ENCODE measurements at regions of chr4 and their contacts with region 1.

Region 1: DNA sequence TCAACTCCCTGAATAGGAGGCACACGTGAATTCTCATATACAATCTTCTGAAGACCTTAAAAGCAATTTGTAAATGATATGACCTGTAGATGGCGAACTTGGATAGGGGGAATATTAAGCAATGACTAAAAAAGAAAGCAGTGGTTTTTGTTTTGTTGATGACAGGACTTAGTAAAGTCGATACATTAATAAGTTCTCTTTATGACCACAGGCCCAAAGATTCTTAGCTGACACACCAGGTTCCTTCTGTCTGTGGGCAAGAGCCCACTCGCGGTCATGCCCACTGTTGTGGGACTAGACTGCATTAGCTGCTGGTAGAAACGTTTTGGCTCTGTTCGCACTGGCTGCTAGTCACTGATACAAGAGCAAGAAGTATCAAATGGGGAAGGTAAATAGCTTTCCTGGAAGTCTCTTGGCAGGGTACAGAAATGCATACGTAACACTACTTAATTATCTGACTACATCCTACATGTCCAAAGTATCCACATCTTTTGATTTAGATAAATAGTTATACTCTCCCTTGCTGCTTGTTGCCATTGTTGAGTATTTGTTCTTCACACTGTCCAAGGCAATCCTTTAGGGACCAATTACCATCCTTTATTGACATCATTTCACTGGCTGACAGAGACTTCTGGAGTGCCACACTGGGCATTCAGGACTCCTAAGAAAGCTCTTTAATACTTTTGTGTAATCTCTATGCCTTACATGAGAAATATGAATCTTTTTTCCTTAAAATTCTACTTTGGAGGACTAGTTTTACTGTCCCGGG is 31.0 kb downstream of the ALPK1 start:
- DNase-seq: peak; percentile 73
- ATAC-seq: peak; percentile 92
- H3K4me3 ChIP-seq: no peak overlapping the region
- H3K27ac ChIP-seq: no peak overlapping the region
- H3K4me1 ChIP-seq: peaks cover 4% of the 10 kb centered on the region
- H3K27me3 ChIP-seq: no peaks in the 10 kb centered on the region
- CTCF ChIP-seq: peak; percentile 51 to 78 (median 52); a peak in 5 of 6 replicates
- EP300 ChIP-seq: 0 out of 4 replicates have a peak, but pooled peaks of 1 of the 2 experiments have one; percentile 17
- POLR2A ChIP-seq: no peak
- RAD21 ChIP-seq: peak; percentile 90

Region 2: GRCh38 chr4:112214390-112215264 is 113.5 kb before region 1 on chr4:
- CTCF ChIA-PET with region 1: interaction called, 22 read pairs
- POLR2A ChIA-PET with region 1: interaction called, 4 read pairs
- RAD21 ChIA-PET with region 1: interaction called, 9 read pairs
- SMC1A ChIA-PET with region 1: interaction called, 6 read pairs
- in situ Hi-C with region 1: no loop called
- intact Hi-C with region 1: no loop called
- DNase-seq: no peak
- ATAC-seq: peak; percentile 63; the same call in 2 of the 3 replicates
- H3K4me3 ChIP-seq: no peak overlapping the region
- H3K27ac ChIP-seq: no peak overlapping the region
- H3K4me1 ChIP-seq: no peaks in the 10 kb centered on the region
- H3K27me3 ChIP-seq: no peaks in the 10 kb centered on the region
- CTCF ChIP-seq: peak in 2 of 3 experiments; percentile 20 to 49; a peak in 4 of 6 replicates
- EP300 ChIP-seq: no peak
- POLR2A ChIP-seq: no peak
- RAD21 ChIP-seq: peak; percentile 46; the same call in 1 of the 2 replicates

Region 3: DNA sequence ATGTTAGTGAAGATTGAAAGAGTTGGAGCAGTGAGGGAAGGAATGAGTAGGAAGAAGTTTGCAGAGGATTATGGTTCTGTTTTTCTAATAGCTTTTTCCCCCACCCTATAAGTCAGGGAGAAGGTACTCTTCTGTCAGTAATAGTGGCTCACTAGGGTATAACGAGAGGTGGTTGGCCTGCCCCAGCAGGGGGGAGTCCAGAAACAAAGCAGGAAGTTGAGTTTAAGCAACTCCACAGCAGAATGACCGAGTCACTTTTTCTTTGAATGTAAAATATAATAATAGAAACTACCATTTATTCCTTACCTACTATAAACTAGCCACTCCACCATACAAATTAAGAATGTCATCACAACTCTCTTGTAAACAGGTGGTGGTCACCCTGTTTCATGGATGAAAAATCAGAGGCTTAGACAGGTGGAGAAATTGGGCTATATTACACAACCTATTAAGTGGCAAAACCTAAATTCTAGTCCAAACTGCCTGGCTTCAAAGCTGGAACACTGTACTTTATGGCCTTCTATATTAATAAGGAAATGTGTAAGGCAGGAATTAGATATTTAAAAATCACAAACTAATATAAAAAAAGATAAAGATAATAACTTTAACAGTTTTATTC is 74.7 kb before region 1 on chr4:
- CTCF ChIA-PET with region 1: no interaction called
- POLR2A ChIA-PET with region 1: no interaction called
- RAD21 ChIA-PET with region 1: no interaction called
- SMC1A ChIA-PET with region 1: no interaction called
- in situ Hi-C with region 1: no loop called
- intact Hi-C with region 1: no loop called
- DNase-seq: no peak
- ATAC-seq: peak; percentile 99
- H3K4me3 ChIP-seq: no peak overlapping the region
- H3K27ac ChIP-seq: no peak overlapping the region
- H3K4me1 ChIP-seq: no peaks in the 10 kb centered on the region
- H3K27me3 ChIP-seq: no peaks in the 10 kb centered on the region
- CTCF ChIP-seq: no peak
- EP300 ChIP-seq: no peak
- POLR2A ChIP-seq: no peak
- RAD21 ChIP-seq: no peak

Region 4: DNA sequence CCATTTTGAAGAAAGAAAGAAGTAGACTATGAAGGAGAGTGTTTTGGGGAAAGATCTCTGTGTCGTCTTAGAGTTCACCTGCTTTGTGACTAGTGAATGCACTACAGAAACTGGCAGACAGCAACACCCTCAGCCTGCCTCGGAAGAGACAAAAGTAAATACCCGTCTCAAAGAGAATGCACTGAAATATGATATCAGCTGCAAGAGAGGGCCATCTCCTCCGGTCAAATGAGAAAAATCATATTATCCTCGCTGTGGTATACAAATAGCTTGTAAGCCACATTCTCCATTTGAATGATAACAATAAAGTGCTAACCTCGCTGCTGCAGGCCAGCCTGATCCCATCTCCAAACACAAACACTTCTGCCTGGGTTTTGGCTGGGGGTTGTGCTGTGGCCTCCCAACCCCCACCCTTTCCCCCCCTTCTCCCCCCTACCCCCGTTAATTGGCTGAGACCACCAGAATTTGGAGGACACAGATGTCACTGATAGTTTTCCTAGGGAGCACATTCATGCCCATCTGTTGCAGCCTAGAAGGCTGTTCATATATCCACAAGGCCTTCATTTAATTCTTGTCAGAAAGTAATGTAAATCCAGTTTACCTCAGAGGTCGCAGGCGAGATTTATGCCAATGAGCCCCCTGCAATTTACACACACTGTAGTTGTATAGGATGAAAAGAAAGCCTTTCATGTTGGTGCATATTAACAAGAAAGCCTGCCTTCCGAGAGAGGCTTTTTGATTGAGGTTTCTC is 15.4 kb after region 1 on chr4:
- CTCF ChIA-PET with region 1: interaction called, 9 read pairs
- POLR2A ChIA-PET with region 1: no interaction called
- RAD21 ChIA-PET with region 1: no interaction called
- SMC1A ChIA-PET with region 1: interaction called, 10 read pairs
- in situ Hi-C with region 1: no loop called
- intact Hi-C with region 1: no loop called
- DNase-seq: no peak
- ATAC-seq: no peak
- H3K4me3 ChIP-seq: no peak overlapping the region
- H3K27ac ChIP-seq: no peak overlapping the region
- H3K4me1 ChIP-seq: no peaks in the 10 kb centered on the region
- H3K27me3 ChIP-seq: no peaks in the 10 kb centered on the region
- CTCF ChIP-seq: no peak
- EP300 ChIP-seq: no peak
- POLR2A ChIP-seq: no peak
- RAD21 ChIP-seq: no peak

Region 5: DNA sequence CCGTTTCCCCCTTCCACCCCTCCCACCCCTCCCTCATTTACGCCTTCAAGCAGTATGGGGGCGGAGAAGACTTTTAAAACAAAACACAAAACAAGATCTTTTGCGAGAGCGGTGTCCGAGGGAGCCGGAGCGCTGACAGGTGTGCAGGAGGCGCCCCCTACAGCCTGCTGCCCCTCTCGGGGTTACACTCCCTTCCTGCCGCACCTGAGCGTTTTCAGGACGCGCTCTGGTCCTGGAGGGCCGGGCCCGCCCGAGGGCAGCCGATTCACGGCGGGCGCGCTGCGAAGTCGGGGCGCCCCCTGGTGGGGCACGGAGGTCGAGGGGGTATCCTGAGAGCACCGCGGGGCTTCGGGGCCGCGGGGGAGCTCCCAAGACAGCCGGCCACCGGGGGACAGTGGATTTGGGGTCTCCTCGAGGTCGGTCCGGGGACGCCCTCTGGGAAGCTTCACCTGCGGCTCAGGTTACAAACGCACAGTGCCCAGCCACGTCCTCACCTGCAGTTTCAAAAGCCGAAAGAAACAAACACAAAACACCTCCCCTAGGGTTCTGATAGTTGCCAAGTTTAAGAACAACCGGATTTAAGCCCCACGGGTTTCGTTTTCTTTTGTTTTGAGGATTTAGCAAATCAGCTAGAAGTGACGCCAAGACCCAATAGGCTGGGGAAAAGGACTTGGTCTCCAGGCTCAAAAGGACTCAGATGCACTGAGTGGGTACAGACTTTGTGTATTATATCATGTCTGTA is 195.8 kb after region 1 on chr4:
- CTCF ChIA-PET with region 1: interaction called, 221 read pairs
- POLR2A ChIA-PET with region 1: interaction called, 3 read pairs
- RAD21 ChIA-PET with region 1: interaction called, 72 read pairs
- SMC1A ChIA-PET with region 1: interaction called, 124 read pairs
- in situ Hi-C with region 1: loop called (anchors 5 kb)
- intact Hi-C with region 1: loop called (anchors 1 kb)
- DNase-seq: no peak
- ATAC-seq: peak; percentile 96
- H3K4me3 ChIP-seq: peak overlapping the region; percentile 73; the same call in 1 of the 2 replicates
- H3K27ac ChIP-seq: no peak overlapping the region
- H3K4me1 ChIP-seq: peaks cover 3% of the 10 kb centered on the region
- H3K27me3 ChIP-seq: no peaks in the 10 kb centered on the region; a peak in 2 of 4 replicates
- CTCF ChIP-seq: peak; percentile 88 to 92 (median 90)
- EP300 ChIP-seq: no peak
- POLR2A ChIP-seq: no peak
- RAD21 ChIP-seq: peak; percentile 85

Region 6: DNA sequence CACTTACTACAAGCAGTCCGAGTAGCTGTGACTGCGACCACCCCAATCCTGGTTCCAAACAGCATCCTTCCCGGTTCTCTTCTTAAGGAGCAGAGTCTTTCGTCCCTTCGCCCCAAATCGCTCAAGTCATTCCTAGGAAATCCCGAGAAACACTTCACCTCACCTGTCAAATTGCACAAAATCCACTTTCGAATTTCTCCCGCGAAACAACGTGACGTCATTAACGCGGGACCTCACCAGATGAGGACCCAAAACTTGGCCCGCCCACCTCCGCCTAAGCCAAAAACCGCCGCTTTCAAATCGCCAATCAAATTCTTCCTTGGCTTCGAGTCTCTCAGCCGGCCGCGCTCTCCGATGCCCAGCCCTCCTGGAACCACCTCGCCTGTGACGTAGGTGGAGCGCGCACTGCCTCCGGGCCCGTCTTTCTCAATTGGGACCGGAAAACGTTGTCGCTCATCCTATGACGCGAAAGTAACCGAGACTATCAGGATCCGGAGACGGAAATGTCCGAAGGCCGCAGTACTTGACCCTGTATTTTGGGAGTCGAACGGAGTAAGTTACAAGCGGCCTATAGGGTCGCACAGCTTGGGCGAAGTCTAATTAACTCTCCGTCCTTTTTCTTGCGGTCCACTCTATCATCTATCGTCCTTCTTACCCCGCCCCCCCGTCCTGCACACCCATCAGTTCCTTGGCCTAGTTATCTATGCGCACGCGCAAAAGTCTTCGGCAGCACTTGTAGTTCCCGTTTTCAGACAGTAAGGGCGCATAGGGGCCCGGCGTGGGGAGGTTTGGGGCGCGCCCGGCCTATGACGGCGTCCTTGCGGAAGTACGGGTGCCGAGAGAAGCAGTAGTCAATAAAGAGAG is 308.8 kb after region 1 on chr4 and contains the starts of genes LARP7 and ZGRF1:
- CTCF ChIA-PET with region 1: interaction called, 11 read pairs
- POLR2A ChIA-PET with region 1: no interaction called
- RAD21 ChIA-PET with region 1: no interaction called
- SMC1A ChIA-PET with region 1: no interaction called
- in situ Hi-C with region 1: no loop called
- intact Hi-C with region 1: loop called (anchors 1 kb)
- DNase-seq: peak; percentile 96
- ATAC-seq: peak; percentile 94
- H3K4me3 ChIP-seq: peak within 1 kb of the TSS; percentile 87
- H3K27ac ChIP-seq: peak within 1 kb of the TSS; percentile 98
- H3K4me1 ChIP-seq: peaks cover 20% of the 10 kb centered on the region
- H3K27me3 ChIP-seq: no peaks in the 10 kb centered on the region
- CTCF ChIP-seq: peak; percentile 86 to 96 (median 95)
- EP300 ChIP-seq: peak in 1 of 2 experiments; percentile 32; a peak in 2 of 4 replicates
- POLR2A ChIP-seq: peak; percentile 77
- RAD21 ChIP-seq: peak; percentile 50
- polyA plus RNA-seq, gene LARP7: 79.0 to 107 TPM
- polyA plus RNA-seq, gene ZGRF1: 8.5 to 9.0 TPM